ENCODE measurements at regions of chr12 and their contacts with region 1.

Region 1: GRCh38 chr12:49110464-49111155 is at the start of gene LMBR1L:
- DNase-seq: peak; percentile 94 to 99 (median 97)
- H3K4me3 ChIP-seq: peak within 1 kb of the TSS; percentile 73 to 92
- H3K4me3 Mint-ChIP-seq: peak within 1 kb of the TSS; percentile 91 to 99 (median 98)
- H3K27ac ChIP-seq: peak within 1 kb of the TSS; percentile 88
- H3K27ac Mint-ChIP-seq: peak within 1 kb of the TSS; percentile 94 to 99 (median 98)
- H3K4me1 ChIP-seq: peaks cover 22% of the 10 kb centered on the region
- H3K4me1 Mint-ChIP-seq: peaks cover 25 to 48% (median 35%) of the 10 kb centered on the region in 4 donors
- H3K27me3 ChIP-seq: no peaks in the 10 kb centered on the region
- H3K27me3 Mint-ChIP-seq: no peaks in the 10 kb centered on the region
- total RNA-seq, gene LMBR1L: 222 to 226 TPM

Region 2: DNA sequence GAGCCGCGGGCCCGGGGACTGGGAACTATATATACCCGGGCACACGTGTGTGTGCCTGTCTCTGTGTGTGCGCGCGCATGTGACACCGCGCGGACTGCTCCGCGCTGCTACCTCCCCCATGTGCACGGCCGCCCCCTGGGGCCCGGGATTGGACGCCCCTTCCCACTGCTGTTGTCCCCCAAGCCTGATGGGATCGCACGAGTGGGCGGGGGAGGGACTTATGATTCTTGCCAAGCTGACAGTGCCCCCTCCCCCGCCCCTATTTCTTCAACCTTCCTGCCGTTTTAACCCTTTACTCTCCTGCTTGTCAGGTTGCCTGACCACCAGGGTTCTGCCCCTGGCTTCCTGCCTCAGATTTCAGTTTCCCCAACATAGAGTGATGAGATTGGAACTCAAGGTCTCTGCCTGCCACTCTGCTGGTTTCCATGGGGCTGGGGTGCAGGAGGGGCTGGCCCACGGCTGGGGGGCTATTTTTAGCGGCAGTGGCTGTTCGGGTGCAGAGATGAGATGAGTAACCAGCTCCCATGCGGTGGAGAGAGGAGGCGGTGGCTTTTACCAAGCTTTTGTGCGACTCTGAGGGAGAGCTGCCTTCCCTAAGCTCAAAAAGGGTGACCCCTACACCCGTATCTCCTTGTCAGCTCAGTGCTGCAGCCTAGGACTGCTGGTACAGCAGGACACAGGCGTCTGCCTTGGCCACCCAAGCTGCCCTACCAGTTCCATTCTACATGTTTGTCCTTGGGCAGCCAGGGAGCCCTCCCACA is 111.1 kb before region 1 on chr12 and contains the start of gene DDN:
- CTCF ChIA-PET with region 1: no interaction called
- POLR2A ChIA-PET with region 1: no interaction called
- intact Hi-C with region 1: no loop called
- DNase-seq: peak in 4 of 5 donors; percentile 34 to 64 (median 47)
- H3K4me3 ChIP-seq: peak within 1 kb of the TSS in 1 of 2 donors; percentile 60
- H3K4me3 Mint-ChIP-seq: peak within 1 kb of the TSS; percentile 60 to 83 (median 78)
- H3K27ac ChIP-seq: no peak within 1 kb of the TSS
- H3K27ac Mint-ChIP-seq: peak within 1 kb of the TSS in 5 of 7 donors; percentile 27 to 83 (median 42)
- H3K4me1 ChIP-seq: peaks cover 42% of the 10 kb centered on the region
- H3K4me1 Mint-ChIP-seq: peaks cover 17 to 47% (median 25%) of the 10 kb centered on the region in 4 donors
- H3K27me3 ChIP-seq: peaks cover 10% of the 10 kb centered on the region
- H3K27me3 Mint-ChIP-seq: peaks cover 20 to 44% of the 10 kb centered on the region in 2 donors
- total RNA-seq, gene DDN: not detected

Region 3: GRCh38 chr12:49014547-49014946 is 96.1 kb before region 1 on chr12:
- CTCF ChIA-PET with region 1: no interaction called
- POLR2A ChIA-PET with region 1: no interaction called
- intact Hi-C with region 1: no loop called
- DNase-seq: no peak
- H3K4me3 ChIP-seq: no peak overlapping the region
- H3K4me3 Mint-ChIP-seq: no peak overlapping the region
- H3K27ac ChIP-seq: no peak overlapping the region
- H3K27ac Mint-ChIP-seq: peak overlapping the region in 2 of 7 donors; percentile 53 to 76
- H3K4me1 ChIP-seq: peaks cover 20% of the 10 kb centered on the region
- H3K4me1 Mint-ChIP-seq: peaks cover 16 to 46% (median 32%) of the 10 kb centered on the region in 4 donors
- H3K27me3 ChIP-seq: no peaks in the 10 kb centered on the region
- H3K27me3 Mint-ChIP-seq: no peaks in the 10 kb centered on the region

Region 4: GRCh38 chr12:49069507-49070346 is 40.9 kb before region 1 on chr12 and contains the start of gene RHEBL1:
- CTCF ChIA-PET with region 1: interaction called, 21 read pairs
- POLR2A ChIA-PET with region 1: interaction called, 21 read pairs
- intact Hi-C with region 1: no loop called
- DNase-seq: peak; percentile 96 to 98 (median 97)
- H3K4me3 ChIP-seq: peak within 1 kb of the TSS; percentile 69 to 77
- H3K4me3 Mint-ChIP-seq: peak within 1 kb of the TSS; percentile 92 to 99 (median 94)
- H3K27ac ChIP-seq: peak within 1 kb of the TSS; percentile 71
- H3K27ac Mint-ChIP-seq: peak within 1 kb of the TSS; percentile 87 to 98 (median 94)
- H3K4me1 ChIP-seq: peaks cover 13% of the 10 kb centered on the region
- H3K4me1 Mint-ChIP-seq: peaks cover 8 to 18% (median 15%) of the 10 kb centered on the region in 4 donors
- H3K27me3 ChIP-seq: no peaks in the 10 kb centered on the region
- H3K27me3 Mint-ChIP-seq: no peaks in the 10 kb centered on the region
- total RNA-seq, gene RHEBL1: 2.7 to 2.9 TPM

Region 5: GRCh38 chr12:49098035-49098451 is 12.6 kb before region 1 on chr12:
- CTCF ChIA-PET with region 1: interaction called, 85 read pairs
- POLR2A ChIA-PET with region 1: interaction called, 24 read pairs
- intact Hi-C with region 1: loop called (anchors 1 kb)
- DNase-seq: peak; percentile 49 to 63 (median 58)
- H3K4me3 ChIP-seq: no peak overlapping the region
- H3K4me3 Mint-ChIP-seq: peak overlapping the region in 1 of 8 donors; percentile 15
- H3K27ac ChIP-seq: no peak overlapping the region
- H3K27ac Mint-ChIP-seq: peak overlapping the region in 2 of 7 donors; percentile 15 to 51
- H3K4me1 ChIP-seq: peaks cover 18% of the 10 kb centered on the region
- H3K4me1 Mint-ChIP-seq: peaks cover 11 to 27% (median 16%) of the 10 kb centered on the region in 4 donors
- H3K27me3 ChIP-seq: peaks cover 20% of the 10 kb centered on the region
- H3K27me3 Mint-ChIP-seq: peaks cover 7 to 18% of the 10 kb centered on the region in 2 donors

Region 6: GRCh38 chr12:49232940-49233841 is 122.6 kb after region 1 on chr12:
- CTCF ChIA-PET with region 1: interaction called, 5 read pairs
- POLR2A ChIA-PET with region 1: interaction called, 4 read pairs
- intact Hi-C with region 1: loop called (anchors 1 kb)
- DNase-seq: no peak
- H3K4me3 ChIP-seq: no peak overlapping the region
- H3K4me3 Mint-ChIP-seq: peak overlapping the region; percentile 21 to 61 (median 53)
- H3K27ac ChIP-seq: no peak overlapping the region
- H3K27ac Mint-ChIP-seq: peak overlapping the region in 6 of 7 donors; percentile 33 to 81 (median 54)
- H3K4me1 ChIP-seq: no peaks in the 10 kb centered on the region
- H3K4me1 Mint-ChIP-seq: peaks cover 0 to 13% (median 6%) of the 10 kb centered on the region in 4 donors
- H3K27me3 ChIP-seq: no peaks in the 10 kb centered on the region
- H3K27me3 Mint-ChIP-seq: no peaks in the 10 kb centered on the region

Region 7: DNA sequence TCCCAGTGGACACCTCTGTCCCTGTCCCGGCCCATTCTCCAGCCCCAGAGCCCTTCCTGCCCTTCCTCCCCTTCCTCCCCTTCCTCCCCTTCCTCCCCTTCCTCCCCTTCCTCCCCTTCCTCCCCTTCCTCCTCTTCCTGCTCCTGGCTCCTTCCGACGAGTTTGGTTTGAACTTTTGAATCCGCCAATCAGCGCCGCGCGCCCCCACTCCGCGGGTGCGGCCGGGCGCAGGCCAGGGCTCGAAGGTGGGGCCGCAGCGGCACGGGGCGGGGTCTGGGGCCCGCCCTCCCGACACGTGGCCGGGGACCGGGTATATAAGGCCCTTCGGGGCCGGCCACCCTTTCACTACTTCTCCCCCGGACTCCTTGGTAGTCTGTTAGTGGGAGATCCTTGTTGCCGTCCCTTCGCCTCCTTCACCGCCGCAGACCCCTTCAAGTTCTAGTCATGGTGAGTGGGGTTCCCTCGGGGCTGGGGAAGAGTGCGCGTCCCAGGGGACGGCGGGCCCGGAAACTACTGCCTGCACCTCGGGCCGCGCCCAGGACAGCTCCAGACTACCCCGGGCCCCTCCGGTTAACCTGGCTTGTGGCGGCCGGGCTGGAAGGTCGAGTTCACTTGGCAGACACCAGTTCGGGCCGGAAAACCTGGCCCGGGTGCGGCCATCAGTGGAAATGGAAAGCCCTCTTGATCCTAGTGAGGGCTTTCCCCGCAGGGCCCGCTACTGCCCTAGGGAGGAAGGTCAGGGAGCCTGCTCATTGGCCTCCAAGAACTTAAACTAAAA is 154.3 kb after region 1 on chr12 and contains the start of gene TUBA1C:
- CTCF ChIA-PET with region 1: no interaction called
- POLR2A ChIA-PET with region 1: interaction called, 8 read pairs
- intact Hi-C with region 1: loop called (anchors 1 kb)
- DNase-seq: peak; percentile 80 to 84 (median 82)
- H3K4me3 ChIP-seq: peak within 1 kb of the TSS; percentile 65 to 96
- H3K4me3 Mint-ChIP-seq: peak within 1 kb of the TSS; percentile 90 to 99 (median 96)
- H3K27ac ChIP-seq: peak within 1 kb of the TSS; percentile 74
- H3K27ac Mint-ChIP-seq: peak within 1 kb of the TSS; percentile 92 to 98 (median 94)
- H3K4me1 ChIP-seq: peaks cover 36% of the 10 kb centered on the region
- H3K4me1 Mint-ChIP-seq: peaks cover 8 to 42% (median 23%) of the 10 kb centered on the region in 4 donors
- H3K27me3 ChIP-seq: no peaks in the 10 kb centered on the region
- H3K27me3 Mint-ChIP-seq: no peaks in the 10 kb centered on the region
- total RNA-seq, gene TUBA1C: 50.6 to 51.2 TPM

Measured in CD4-positive, alpha-beta memory T cell (primary cell).